ENCODE measurements at regions of chr1 and their contacts with region 1.

Region 1: DNA sequence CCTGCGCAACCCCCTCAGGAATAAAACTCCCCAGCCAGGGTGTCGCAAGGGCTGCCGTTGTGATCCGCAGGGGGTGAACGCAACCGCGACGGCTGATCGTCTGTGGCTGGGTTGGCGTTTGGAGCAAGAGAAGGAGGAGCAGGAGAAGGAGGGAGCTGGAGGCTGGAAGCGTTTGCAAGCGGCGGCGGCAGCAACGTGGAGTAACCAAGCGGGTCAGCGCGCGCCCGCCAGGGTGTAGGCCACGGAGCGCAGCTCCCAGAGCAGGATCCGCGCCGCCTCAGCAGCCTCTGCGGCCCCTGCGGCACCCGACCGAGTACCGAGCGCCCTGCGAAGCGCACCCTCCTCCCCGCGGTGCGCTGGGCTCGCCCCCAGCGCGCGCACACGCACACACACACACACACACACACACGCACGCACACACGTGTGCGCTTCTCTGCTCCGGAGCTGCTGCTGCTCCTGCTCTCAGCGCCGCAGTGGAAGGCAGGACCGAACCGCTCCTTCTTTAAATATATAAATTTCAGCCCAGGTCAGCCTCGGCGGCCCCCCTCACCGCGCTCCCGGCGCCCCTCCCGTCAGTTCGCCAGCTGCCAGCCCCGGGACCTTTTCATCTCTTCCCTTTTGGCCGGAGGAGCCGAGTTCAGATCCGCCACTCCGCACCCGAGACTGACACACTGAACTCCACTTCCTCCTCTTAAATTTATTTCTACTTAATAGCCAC is 696 bp downstream of the TGFB2 start:
- DNase-seq: peak; percentile 83
- ATAC-seq: peak; percentile 73
- H3K4me3 ChIP-seq: peak overlapping the region; percentile 59 to 83 (median 75)
- H3K4me3 Mint-ChIP-seq: no peak overlapping the region
- H3K27ac ChIP-seq: peak overlapping the region; percentile 21 to 37
- H3K27ac Mint-ChIP-seq: no peak overlapping the region
- H3K4me1 ChIP-seq: peaks cover 39% of the 10 kb centered on the region in 2 donors
- H3K4me1 Mint-ChIP-seq: peaks cover 40% of the 10 kb centered on the region
- H3K27me3 ChIP-seq: no peaks in the 10 kb centered on the region
- H3K27me3 Mint-ChIP-seq: no peaks in the 10 kb centered on the region
- CTCF ChIP-seq: no peak

Region 2: GRCh38 chr1:218156595-218156994 is 189.2 kb before region 1 on chr1:
- CTCF ChIA-PET with region 1: no interaction called
- POLR2A ChIA-PET with region 1: no interaction called
- intact Hi-C with region 1: no loop called
- DNase-seq: no peak
- ATAC-seq: no peak
- H3K4me3 ChIP-seq: no peak overlapping the region
- H3K4me3 Mint-ChIP-seq: no peak overlapping the region
- H3K27ac ChIP-seq: no peak overlapping the region
- H3K27ac Mint-ChIP-seq: no peak overlapping the region
- H3K4me1 ChIP-seq: no peaks in the 10 kb centered on the region
- H3K4me1 Mint-ChIP-seq: no peaks in the 10 kb centered on the region
- H3K27me3 ChIP-seq: peaks cover 0 to 18% (median 4%) of the 10 kb centered on the region in 4 experiments
- H3K27me3 Mint-ChIP-seq: peaks cover 40% of the 10 kb centered on the region
- CTCF ChIP-seq: no peak

Region 3: DNA sequence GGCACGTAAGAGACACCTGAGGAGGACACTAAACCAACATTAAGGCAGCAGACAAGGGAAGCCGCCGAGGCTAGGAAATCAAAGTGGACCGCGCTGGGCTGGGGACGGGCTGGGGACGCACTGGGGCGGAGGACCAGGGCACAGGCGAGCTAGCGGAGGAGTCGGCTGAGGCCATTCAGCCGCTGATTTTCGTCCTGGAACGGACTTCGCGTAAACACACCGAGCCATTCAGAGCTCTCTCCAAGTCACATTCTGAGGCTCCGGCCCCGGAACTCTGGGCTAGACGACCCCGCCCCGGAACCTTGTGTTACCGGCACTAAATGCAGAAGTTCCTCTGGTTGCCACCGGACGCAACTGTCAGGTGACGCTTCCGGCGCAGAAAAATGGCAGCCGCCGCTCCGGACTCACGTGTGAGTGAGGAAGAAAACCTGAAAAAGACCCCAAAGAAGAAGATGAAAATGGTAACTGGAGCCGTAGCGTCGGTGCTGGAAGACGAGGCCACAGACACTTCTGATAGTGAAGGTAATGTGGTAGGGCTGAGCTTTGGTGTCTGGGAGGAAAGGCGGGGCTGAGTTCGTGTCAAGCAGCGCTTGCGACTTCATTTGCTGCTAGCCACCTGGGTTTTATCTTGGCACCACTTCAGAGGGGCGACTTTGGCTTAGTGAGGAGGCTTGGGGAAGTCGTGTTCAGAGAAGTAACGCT is 60.7 kb before region 1 on chr1 and contains the start of gene RRP15:
- CTCF ChIA-PET with region 1: no interaction called
- POLR2A ChIA-PET with region 1: no interaction called
- intact Hi-C with region 1: loop called (anchors 2 kb)
- DNase-seq: peak; percentile 92
- ATAC-seq: peak; percentile 97
- H3K4me3 ChIP-seq: peak within 1 kb of the TSS; percentile 76 to 100 (median 87)
- H3K4me3 Mint-ChIP-seq: peak within 1 kb of the TSS; percentile 97
- H3K27ac ChIP-seq: peak within 1 kb of the TSS; percentile 76 to 81
- H3K27ac Mint-ChIP-seq: peak within 1 kb of the TSS; percentile 98
- H3K4me1 ChIP-seq: peaks cover 15 to 17% of the 10 kb centered on the region in 2 donors
- H3K4me1 Mint-ChIP-seq: peaks cover 31% of the 10 kb centered on the region
- H3K27me3 ChIP-seq: peaks cover 0 to 11% (median 2%) of the 10 kb centered on the region in 4 experiments
- H3K27me3 Mint-ChIP-seq: peaks cover 16% of the 10 kb centered on the region
- CTCF ChIP-seq: no peak
- total RNA-seq, gene RRP15: 16.4 and 20.2 TPM in 2 replicates

Region 4: GRCh38 chr1:218439541-218440295 is 93.9 kb after region 1 on chr1:
- CTCF ChIA-PET with region 1: no interaction called
- POLR2A ChIA-PET with region 1: no interaction called
- intact Hi-C with region 1: loop called (anchors 10 kb)
- DNase-seq: no peak
- ATAC-seq: no peak
- H3K4me3 ChIP-seq: no peak overlapping the region
- H3K4me3 Mint-ChIP-seq: no peak overlapping the region
- H3K27ac ChIP-seq: no peak overlapping the region
- H3K27ac Mint-ChIP-seq: no peak overlapping the region
- H3K4me1 ChIP-seq: no peaks in the 10 kb centered on the region
- H3K4me1 Mint-ChIP-seq: peaks cover 3% of the 10 kb centered on the region
- H3K27me3 ChIP-seq: no peaks in the 10 kb centered on the region
- H3K27me3 Mint-ChIP-seq: no peaks in the 10 kb centered on the region
- CTCF ChIP-seq: no peak

Region 5: DNA sequence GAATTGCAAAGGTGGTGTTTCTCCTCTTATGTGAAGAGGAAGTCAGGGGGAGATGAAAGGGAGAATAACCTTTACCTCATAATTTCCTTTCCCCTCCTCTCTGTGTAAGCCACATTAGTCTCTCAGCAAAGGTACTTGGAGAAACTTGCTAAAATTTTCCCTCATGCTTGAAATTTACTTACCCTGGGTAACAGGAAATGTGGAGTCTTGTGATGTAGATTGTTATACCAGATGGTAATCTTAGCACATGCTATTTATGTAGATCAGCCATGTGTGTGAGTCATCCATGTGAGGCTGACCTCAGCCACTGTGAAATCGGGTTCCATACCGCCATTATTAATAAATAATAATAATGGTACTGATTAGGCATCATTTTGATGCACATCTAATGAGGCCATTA is 127.7 kb after region 1 on chr1:
- CTCF ChIA-PET with region 1: no interaction called
- POLR2A ChIA-PET with region 1: no interaction called
- intact Hi-C with region 1: loop called (anchors 5 kb)
- DNase-seq: peak; percentile 56
- ATAC-seq: peak; percentile 62
- H3K4me3 ChIP-seq: peak overlapping the region in 2 of 5 experiments; percentile 25 to 39
- H3K4me3 Mint-ChIP-seq: peak overlapping the region; percentile 67
- H3K27ac ChIP-seq: peak overlapping the region; percentile 50 to 74
- H3K27ac Mint-ChIP-seq: peak overlapping the region; percentile 83
- H3K4me1 ChIP-seq: peaks cover 27 to 30% of the 10 kb centered on the region in 2 donors
- H3K4me1 Mint-ChIP-seq: peaks cover 34% of the 10 kb centered on the region
- H3K27me3 ChIP-seq: no peaks in the 10 kb centered on the region
- H3K27me3 Mint-ChIP-seq: no peaks in the 10 kb centered on the region
- CTCF ChIP-seq: no peak

Region 6: DNA sequence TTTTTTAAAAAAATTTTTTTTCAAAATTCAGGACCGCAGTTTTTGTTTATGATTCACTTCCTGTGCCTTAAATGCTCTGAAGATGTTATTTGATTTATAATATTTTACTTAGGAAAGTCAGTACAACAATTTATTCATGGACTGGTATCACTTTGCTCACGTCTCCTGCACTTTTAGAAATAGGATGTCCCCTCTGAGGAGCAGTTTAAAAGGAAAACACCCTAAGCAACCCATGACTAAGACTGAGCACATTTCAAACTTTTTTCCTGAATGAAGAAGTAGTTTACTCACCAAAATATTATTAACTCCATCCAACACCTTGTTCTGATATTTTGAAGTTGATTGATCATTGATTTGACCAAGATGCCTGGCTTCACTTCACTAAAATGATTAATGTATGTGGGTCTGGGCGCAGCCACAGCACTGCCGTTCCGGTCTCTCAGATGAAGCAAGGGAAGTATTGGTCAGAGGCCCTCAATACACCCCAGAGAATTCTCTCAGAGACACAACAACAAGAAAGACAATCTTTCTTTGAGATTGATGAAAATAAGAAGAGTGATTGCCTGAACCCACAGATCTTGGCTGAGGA is 223.2 kb after region 1 on chr1:
- CTCF ChIA-PET with region 1: no interaction called
- POLR2A ChIA-PET with region 1: no interaction called
- intact Hi-C with region 1: no loop called
- DNase-seq: no peak
- ATAC-seq: no peak
- H3K4me3 ChIP-seq: no peak overlapping the region
- H3K4me3 Mint-ChIP-seq: no peak overlapping the region
- H3K27ac ChIP-seq: no peak overlapping the region
- H3K27ac Mint-ChIP-seq: no peak overlapping the region
- H3K4me1 ChIP-seq: no peaks in the 10 kb centered on the region
- H3K4me1 Mint-ChIP-seq: no peaks in the 10 kb centered on the region
- H3K27me3 ChIP-seq: no peaks in the 10 kb centered on the region
- H3K27me3 Mint-ChIP-seq: no peaks in the 10 kb centered on the region
- CTCF ChIP-seq: no peak

Region 7: DNA sequence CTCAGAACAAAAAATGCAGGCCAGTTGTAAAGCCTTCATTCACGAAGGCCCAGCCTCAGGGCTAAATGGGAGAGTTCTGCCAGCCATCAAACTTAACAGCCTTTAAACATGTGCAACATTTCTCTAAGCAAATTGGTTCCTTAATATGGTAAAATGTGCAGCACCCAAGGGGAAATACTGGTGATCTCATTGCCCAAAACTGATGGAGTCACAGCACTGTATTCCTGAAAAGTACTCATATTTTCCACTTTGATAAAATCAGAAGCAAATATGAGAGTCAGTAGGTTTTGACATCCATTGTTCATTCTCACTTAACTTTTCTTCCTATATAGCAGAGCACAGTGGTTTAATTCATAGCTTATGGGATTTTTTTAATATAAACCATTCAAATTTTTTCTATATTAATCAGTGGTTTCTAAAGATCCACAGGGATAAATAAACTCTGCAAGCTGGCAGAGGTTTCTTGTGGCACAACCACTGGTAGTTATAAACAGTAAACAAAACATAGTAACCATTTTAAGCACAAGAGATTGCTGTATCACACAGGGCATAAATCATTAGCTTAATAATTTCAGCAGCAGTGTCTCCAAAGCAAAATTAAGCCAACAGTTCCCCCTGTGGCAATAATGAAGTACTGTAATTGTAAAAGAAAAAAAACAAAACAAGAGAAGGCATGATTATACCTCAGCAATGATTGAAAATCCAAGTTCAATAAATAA is 721.0 kb after region 1 on chr1:
- CTCF ChIA-PET with region 1: interaction called, 4 read pairs
- POLR2A ChIA-PET with region 1: no interaction called
- intact Hi-C with region 1: loop called (anchors 10 kb)
- DNase-seq: no peak
- ATAC-seq: no peak
- H3K4me3 ChIP-seq: no peak overlapping the region
- H3K4me3 Mint-ChIP-seq: no peak overlapping the region
- H3K27ac ChIP-seq: no peak overlapping the region
- H3K27ac Mint-ChIP-seq: no peak overlapping the region
- H3K4me1 ChIP-seq: no peaks in the 10 kb centered on the region
- H3K4me1 Mint-ChIP-seq: peaks cover 9% of the 10 kb centered on the region
- H3K27me3 ChIP-seq: no peaks in the 10 kb centered on the region
- H3K27me3 Mint-ChIP-seq: no peaks in the 10 kb centered on the region
- CTCF ChIP-seq: peak; percentile 54